Left ventricle myocardium superior (tissue), 1 donor: ENCODE measurements at regions of chr17 and their contacts with region 1.

Region 1: DNA sequence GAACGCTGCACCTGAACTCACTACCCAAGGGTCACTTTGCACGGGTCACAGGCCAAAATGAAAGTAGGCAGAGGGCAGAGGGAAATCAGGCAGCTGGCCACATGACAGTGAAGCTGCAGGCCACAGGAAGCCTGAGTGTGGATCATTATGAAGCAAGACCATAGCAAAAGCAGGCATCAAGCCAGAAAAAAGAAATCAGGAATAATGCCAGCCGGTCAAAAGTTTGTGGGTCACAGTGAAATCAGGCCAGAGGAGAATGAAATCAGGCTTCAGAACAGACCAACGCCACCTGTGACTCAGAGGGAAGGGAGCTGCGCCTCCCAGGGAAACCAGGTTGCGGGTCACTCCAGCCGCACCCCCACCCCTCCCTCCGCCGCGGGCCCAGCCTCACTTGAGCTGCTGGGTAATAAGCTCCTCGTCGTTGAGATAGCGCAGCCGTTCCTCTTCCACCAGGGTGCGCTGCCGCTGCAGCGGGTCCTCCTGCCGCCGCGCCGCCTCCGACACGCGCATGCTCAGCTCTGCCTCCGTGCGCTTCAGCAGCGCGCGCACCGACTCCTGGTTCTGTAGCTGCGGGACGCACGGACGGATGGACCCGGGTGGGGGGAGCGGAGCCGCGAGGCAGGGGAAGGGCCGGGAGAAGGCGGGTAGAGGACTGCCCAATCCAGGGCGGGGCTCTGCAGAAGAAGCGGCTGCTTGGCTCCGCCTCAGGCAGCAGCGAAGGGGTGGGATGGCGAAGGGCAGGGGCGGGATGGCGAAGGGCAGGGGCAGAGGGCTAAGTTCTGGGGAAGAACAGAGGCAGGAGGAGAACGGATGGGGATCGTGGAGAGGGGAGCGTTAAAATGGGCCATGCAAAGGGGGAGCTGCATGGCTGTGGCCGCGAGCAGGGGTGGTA is 47.7 kb downstream of the SRCIN1 start:
- DNase-seq: peak; percentile 95
- ATAC-seq: peak; percentile 94

Region 2: DNA sequence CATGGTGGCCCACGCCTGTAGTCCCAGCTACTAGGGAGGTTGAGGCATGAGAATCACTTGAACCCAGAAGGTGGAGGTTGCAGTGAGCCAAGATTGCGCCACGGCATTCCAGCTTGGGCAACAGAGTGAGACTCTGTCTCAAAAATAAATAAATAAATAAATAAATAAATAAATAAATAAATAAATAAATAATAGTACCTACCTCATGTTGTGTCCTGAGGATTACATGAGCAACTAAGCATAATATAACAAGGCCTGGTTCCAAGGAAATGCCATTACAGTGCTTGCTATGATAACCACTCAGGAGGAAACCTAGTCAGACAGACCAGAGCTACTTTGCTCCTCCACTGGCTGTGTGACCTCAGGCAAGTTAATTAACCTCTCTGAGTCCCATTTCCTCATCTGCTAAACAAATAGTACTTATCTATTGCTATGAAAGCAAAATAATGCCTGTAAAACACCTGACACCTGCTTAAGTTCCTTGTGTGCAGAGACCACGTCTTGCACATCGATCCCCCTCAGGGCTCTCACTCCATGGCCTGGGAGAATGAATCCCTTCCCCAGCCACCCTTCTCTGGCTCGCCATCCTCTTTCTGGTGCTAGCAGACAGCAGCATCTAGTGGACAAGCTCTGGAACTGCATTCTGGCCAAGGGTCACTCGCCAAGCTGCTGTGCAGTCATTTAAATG is 109.2 kb after region 1 on chr17:
- intact Hi-C with region 1: loop called (anchors 10 kb)
- DNase-seq: peak; percentile 48
- ATAC-seq: peak; percentile 74